ENCODE measurements at regions of chr18 and their contacts with region 1.

Region 1: GRCh38 chr18:48777026-48777743 is 173.6 kb downstream of the SMAD7 start:
- DNase-seq: peak in 1 of 2 donors; percentile 82
- H3K4me3 ChIP-seq: no peak overlapping the region
- H3K27ac ChIP-seq: peak overlapping the region; percentile 81 to 92
- H3K4me1 ChIP-seq: peaks cover 14 to 63% (median 51%) of the 10 kb centered on the region in 4 donors
- H3K27me3 ChIP-seq: no peaks in the 10 kb centered on the region
- CTCF ChIP-seq: peak; percentile 83 to 89

Region 2: GRCh38 chr18:48719974-48720654 is 57.1 kb before region 1 on chr18:
- intact Hi-C with region 1: no loop called
- DNase-seq: no peak
- H3K4me3 ChIP-seq: no peak overlapping the region
- H3K27ac ChIP-seq: peak overlapping the region in 1 of 2 donors; percentile 11
- H3K4me1 ChIP-seq: peaks cover 0 to 37% (median 21%) of the 10 kb centered on the region in 4 donors
- H3K27me3 ChIP-seq: no peaks in the 10 kb centered on the region
- CTCF ChIP-seq: no peak

Region 3: GRCh38 chr18:48951448-48952286 is 174.5 kb after region 1 on chr18:
- intact Hi-C with region 1: loop called (anchors 5 kb)
- DNase-seq: peak; percentile 88 to 95
- H3K4me3 ChIP-seq: peak overlapping the region; percentile 58 to 98
- H3K27ac ChIP-seq: peak overlapping the region; percentile 88 to 99
- H3K4me1 ChIP-seq: peaks cover 0 to 44% (median 35%) of the 10 kb centered on the region in 4 donors
- H3K27me3 ChIP-seq: no peaks in the 10 kb centered on the region
- CTCF ChIP-seq: peak in 1 of 2 experiments; percentile 30

Region 4: GRCh38 chr18:49041435-49042245 is 264.5 kb after region 1 on chr18:
- intact Hi-C with region 1: loop called (anchors 10 kb)
- DNase-seq: peak; percentile 62 to 80
- H3K4me3 ChIP-seq: no peak overlapping the region
- H3K27ac ChIP-seq: peak overlapping the region; percentile 49 to 64
- H3K4me1 ChIP-seq: peaks cover 0 to 9% (median 8%) of the 10 kb centered on the region in 4 donors
- H3K27me3 ChIP-seq: no peaks in the 10 kb centered on the region
- CTCF ChIP-seq: peak; percentile 61 to 62

Region 5: DNA sequence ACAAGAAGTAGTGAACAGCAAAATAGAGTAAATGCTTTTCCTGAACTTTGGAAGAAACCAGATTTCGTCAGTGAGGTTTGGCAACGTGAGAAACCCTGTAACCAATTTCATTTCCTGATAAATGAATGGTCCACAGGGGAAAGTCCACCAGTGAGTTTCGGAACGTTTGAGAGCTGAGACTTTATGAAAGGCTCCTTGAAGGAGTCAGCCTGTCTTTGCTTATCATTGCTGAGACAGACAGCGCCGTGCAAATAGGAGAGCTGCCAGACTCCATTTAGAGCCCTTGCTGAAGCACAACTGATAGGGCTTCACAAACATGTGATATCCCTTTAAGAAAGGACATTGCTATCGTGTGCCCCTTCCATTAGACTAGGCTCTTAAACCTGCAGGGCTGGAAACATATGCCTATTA is 295.3 kb after region 1 on chr18:
- intact Hi-C with region 1: no loop called
- DNase-seq: no peak
- H3K4me3 ChIP-seq: peak overlapping the region; percentile 32 to 41
- H3K27ac ChIP-seq: peak overlapping the region; percentile 56 to 57
- H3K4me1 ChIP-seq: peaks cover 0 to 26% (median 3%) of the 10 kb centered on the region in 4 donors
- H3K27me3 ChIP-seq: no peaks in the 10 kb centered on the region
- CTCF ChIP-seq: no peak

Region 6: DNA sequence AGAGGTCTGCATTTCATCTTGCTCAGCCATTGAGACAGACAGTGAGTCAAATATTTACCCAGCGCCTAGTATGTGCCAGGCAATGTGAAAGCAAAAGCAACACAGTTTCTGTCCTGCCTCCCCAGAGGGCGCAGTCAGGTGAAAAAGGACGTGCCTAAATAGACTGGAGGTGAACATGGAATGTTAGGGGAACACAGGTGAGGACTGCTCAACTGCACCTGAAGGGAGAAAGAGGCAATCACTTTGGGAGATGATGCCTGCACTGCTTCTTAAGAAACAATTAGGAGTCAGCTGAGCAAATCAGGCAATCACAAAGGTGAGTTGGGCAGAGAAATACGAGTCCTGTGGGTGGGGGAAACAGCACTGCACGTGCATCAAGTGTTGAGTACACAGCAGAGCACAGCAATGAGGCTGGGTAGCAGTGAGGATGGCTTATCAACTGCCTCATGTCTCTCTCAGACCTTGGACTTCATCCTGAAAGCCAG is 391.9 kb after region 1 on chr18:
- intact Hi-C with region 1: no loop called
- DNase-seq: no peak
- H3K4me3 ChIP-seq: no peak overlapping the region
- H3K27ac ChIP-seq: peak overlapping the region; percentile 49 to 51
- H3K4me1 ChIP-seq: peaks cover 0 to 35% (median 21%) of the 10 kb centered on the region in 4 donors
- H3K27me3 ChIP-seq: no peaks in the 10 kb centered on the region
- CTCF ChIP-seq: no peak

Region 7: GRCh38 chr18:49189772-49190171 is 412.6 kb after region 1 on chr18:
- intact Hi-C with region 1: loop called (anchors 10 kb)
- DNase-seq: no peak
- H3K4me3 ChIP-seq: no peak overlapping the region
- H3K27ac ChIP-seq: no peak overlapping the region
- H3K4me1 ChIP-seq: peaks cover 0 to 13% (median 3%) of the 10 kb centered on the region in 4 donors
- H3K27me3 ChIP-seq: no peaks in the 10 kb centered on the region
- CTCF ChIP-seq: no peak

Region 8: GRCh38 chr18:49412679-49413078 is 635.5 kb after region 1 on chr18:
- intact Hi-C with region 1: loop called (anchors 10 kb)
- DNase-seq: no peak
- H3K4me3 ChIP-seq: no peak overlapping the region
- H3K27ac ChIP-seq: no peak overlapping the region
- H3K4me1 ChIP-seq: peaks cover 0 to 19% (median 0%) of the 10 kb centered on the region in 4 donors
- H3K27me3 ChIP-seq: no peaks in the 10 kb centered on the region
- CTCF ChIP-seq: no peak